ENCODE measurements at regions of chr13 and their contacts with region 1.

Region 1: GRCh38 chr13:85828149-85828548 is 28.9 kb upstream of the SLITRK6 start:
- DNase-seq: peak; percentile 4
- H3K4me3 ChIP-seq: no peak overlapping the region
- H3K27ac ChIP-seq: no peak overlapping the region
- H3K4me1 ChIP-seq: no peaks in the 10 kb centered on the region
- H3K27me3 ChIP-seq: no peaks in the 10 kb centered on the region
- CTCF ChIP-seq: peak; percentile 32 to 39
- POLR2A ChIP-seq: no peak

Region 2: GRCh38 chr13:84896128-84896527 is 932.0 kb before region 1 on chr13:
- CTCF ChIA-PET with region 1: interaction called, 5 read pairs
- POLR2A ChIA-PET with region 1: no interaction called
- dilution Hi-C with region 1: no loop called
- intact Hi-C with region 1: loop called (anchors 1 kb)
- DNase-seq: peak; percentile 46
- H3K4me3 ChIP-seq: no peak overlapping the region
- H3K27ac ChIP-seq: no peak overlapping the region
- H3K4me1 ChIP-seq: no peaks in the 10 kb centered on the region
- H3K27me3 ChIP-seq: no peaks in the 10 kb centered on the region
- CTCF ChIP-seq: peak; percentile 30 to 38
- POLR2A ChIP-seq: no peak

Region 3: GRCh38 chr13:84917252-84917878 is 910.8 kb before region 1 on chr13:
- CTCF ChIA-PET with region 1: no interaction called
- POLR2A ChIA-PET with region 1: no interaction called
- dilution Hi-C with region 1: no loop called
- intact Hi-C with region 1: loop called (anchors 5 kb)
- DNase-seq: peak; percentile 16
- H3K4me3 ChIP-seq: no peak overlapping the region
- H3K27ac ChIP-seq: no peak overlapping the region
- H3K4me1 ChIP-seq: no peaks in the 10 kb centered on the region
- H3K27me3 ChIP-seq: no peaks in the 10 kb centered on the region
- CTCF ChIP-seq: no peak
- POLR2A ChIP-seq: no peak

Measured in endothelial cell of umbilical vein (primary cell).